GM13976 (cell line): ENCODE measurements at regions of chr5 and their contacts with region 1.

Region 1: GRCh38 chr5:137501846-137502406 is 2.8 kb upstream of the SPOCK1 start:
- DNase-seq: no peak
- CTCF ChIP-seq: no peak

Region 2: DNA sequence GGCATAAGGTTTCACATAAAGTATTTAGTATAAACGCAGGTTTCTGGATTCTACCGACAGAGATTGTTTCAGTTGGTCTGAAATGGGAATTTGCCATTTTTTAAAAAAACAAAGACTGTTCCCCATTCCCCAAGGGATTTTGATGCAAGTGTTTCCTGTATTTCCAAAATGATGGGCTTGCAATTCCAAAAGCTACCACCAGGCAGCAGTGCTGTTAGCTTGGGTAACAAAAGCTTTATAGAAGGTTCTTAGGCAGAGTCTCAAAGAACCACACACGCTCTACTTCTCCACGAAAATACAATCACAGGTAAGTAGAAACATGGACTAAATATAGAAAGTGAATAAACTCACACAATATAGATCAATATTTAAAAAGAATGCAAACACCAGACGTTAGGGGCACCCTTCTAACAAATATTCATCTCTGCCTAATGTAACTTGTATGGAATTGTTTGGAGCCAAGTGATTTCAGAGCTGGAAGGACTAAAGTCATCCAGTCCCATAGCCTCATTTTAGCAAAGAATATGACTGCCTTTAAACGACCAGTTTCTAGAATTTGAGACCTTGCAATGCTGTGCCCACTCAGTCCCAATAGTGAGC is 157.1 kb before region 1 on chr5:
- in situ Hi-C with region 1: loop called (anchors 10 kb)
- DNase-seq: peak; percentile 30
- CTCF ChIP-seq: peak; percentile 58

Region 3: DNA sequence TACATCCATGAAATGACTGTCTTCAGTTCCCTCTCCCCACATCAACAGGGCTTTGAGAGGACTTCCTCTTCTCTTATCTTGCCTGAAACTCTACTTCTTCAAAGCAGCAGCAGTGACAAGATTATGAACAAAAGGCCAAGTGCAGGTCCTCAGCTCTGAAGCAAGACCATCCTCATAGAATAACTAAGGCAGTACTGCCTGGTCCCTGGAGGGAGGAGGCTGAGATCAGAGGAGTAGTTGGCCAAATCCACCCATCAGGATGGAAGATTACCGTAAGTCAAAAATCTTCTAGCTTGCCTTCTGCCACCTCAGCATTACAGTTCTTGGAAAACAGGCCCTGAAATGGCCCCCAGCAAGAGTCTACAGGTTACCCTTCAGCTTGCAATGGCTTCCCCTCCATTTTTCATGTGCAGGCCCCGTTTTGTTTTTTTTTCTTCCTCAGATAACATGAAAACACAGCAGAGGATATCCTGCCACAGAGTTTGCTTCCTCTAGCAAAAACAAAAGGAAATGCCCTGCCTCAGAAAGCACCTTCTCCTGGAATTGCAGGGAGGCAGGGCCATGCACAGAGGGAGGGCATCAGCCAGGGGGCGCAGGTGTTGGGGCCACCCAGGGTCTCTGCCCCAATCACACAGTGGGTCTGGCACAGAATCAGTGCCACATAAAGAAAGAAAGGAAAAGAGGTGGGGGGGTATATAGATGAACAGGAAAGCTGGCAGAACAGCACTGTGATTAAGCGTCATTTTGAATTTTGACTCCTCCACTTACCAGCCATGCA is 193.9 kb after region 1 on chr5:
- in situ Hi-C with region 1: no loop called
- DNase-seq: peak; percentile 44
- CTCF ChIP-seq: no peak

Region 4: GRCh38 chr5:138018844-138019243 is 516.9 kb after region 1 on chr5:
- in situ Hi-C with region 1: no loop called
- DNase-seq: no peak
- CTCF ChIP-seq: no peak